WTC11 (cell line): ENCODE measurements at regions of chr7 and their contacts with region 1.

Region 1: GRCh38 chr7:134599371-134599770 is 47.3 kb upstream of the BPGM start:
- DNase-seq: no peak
- ATAC-seq: peak; percentile 69
- H3K4me3 Mint-ChIP-seq: no peak overlapping the region
- H3K27ac Mint-ChIP-seq: no peak overlapping the region
- H3K4me1 Mint-ChIP-seq: no peaks in the 10 kb centered on the region
- H3K27me3 Mint-ChIP-seq: no peaks in the 10 kb centered on the region; the same call in 1 of the 2 replicates
- CTCF ChIP-seq: no peak

Region 2: GRCh38 chr7:134690016-134690415 is 90.6 kb after region 1 on chr7:
- CTCF ChIA-PET with region 1: no interaction called
- POLR2A ChIA-PET with region 1: no interaction called
- DNase-seq: no peak
- ATAC-seq: no peak
- H3K4me3 Mint-ChIP-seq: no peak overlapping the region
- H3K27ac Mint-ChIP-seq: no peak overlapping the region
- H3K4me1 Mint-ChIP-seq: peaks cover 5% of the 10 kb centered on the region; the same call in 1 of the 2 replicates
- H3K27me3 Mint-ChIP-seq: no peaks in the 10 kb centered on the region
- CTCF ChIP-seq: no peak

Region 3: DNA sequence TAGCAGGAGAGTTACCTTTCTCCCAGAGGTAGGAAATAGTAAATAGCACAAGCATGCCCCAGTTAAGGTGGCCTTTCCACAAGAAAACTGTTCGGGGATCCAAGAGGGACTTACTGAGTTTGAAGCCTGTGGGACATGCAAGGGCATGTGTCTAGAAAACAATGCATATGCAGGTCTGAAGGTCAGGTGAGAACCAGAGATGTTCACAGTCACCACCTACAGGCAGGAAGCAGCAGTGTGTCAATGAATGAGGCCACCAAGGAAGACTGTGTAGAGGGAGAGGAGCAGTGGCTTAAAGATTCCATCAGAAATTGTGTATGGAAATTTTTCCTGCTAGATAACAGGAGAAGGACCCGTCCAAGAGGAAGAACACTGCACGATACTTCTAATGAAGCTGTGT is 246.1 kb after region 1 on chr7:
- CTCF ChIA-PET with region 1: no interaction called
- POLR2A ChIA-PET with region 1: interaction called, 11 read pairs
- DNase-seq: no peak
- ATAC-seq: peak; percentile 81
- H3K4me3 Mint-ChIP-seq: no peak overlapping the region
- H3K27ac Mint-ChIP-seq: peak overlapping the region; percentile 73
- H3K4me1 Mint-ChIP-seq: peaks cover 34% of the 10 kb centered on the region
- H3K27me3 Mint-ChIP-seq: no peaks in the 10 kb centered on the region; the same call in 1 of the 2 replicates
- CTCF ChIP-seq: no peak